H1 (cell line): ENCODE measurements at regions of chr16 and their contacts with region 1.

Region 1: DNA sequence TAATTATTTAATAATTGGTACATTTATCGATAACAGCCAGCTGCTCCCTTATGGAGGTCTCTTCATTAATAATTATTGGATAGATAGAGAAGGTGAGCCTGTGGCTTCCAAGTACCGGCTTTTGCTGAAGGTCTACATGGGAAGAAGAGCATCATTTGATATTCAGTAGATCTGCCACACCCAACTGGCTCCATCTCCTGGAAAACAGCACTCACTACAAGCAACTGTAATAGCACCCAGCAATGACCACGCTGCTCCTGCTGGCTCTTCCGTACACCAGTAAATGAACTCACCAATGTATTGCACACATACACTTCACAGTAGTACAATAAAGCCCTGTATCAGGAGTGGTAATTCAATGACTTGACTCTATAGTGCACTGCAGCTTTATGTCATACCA is 19.5 kb downstream of the MARVELD3 start:
- DNase-seq: no peak
- H3K4me3 ChIP-seq: no peak overlapping the region
- H3K27ac ChIP-seq: no peak overlapping the region
- H3K4me1 ChIP-seq: no peaks in the 10 kb centered on the region
- H3K27me3 ChIP-seq: no peaks in the 10 kb centered on the region
- CTCF ChIP-seq: peak; percentile 54 to 79 (median 77)
- EP300 ChIP-seq: no peak
- POLR2A ChIP-seq: no peak
- RAD21 ChIP-seq: peak; percentile 67 to 78

Region 2: DNA sequence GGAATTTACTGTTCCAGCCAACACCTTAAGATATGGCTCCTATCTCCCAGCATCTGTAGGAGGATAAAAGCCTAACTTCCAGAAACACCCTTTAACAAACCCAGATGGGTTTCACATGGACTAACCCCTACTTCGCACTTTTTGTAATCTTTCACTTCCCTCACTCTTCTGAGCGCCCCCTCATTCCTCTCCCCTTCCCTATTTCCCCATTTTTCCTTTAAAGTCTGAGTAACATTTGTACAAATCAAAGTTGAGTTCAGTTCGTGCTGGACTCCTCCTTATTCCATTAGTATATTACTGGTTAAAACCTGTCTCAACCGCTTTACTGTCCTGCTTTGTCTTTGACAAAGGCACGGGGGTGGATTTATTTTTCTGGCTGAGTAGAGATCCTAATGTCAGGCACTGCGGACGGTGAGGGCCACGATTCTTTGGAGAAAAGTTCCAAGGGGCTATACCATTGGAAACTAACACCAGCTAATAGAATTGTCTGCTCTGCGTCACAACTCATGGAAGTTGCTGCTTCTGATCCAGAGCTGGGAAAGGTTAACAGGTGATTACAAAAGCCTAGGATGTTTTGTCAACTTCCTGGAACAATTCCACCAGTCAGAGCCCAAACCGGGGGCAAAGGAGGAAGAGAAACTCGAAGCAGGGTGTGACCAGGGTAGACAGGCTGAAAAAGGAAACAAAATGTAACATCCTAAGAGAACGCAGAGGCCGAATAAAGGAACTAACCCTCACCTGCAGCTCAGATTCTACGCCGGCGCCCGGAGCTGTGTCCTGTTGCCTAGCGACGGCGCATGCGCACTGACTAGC is 81.1 kb before region 1 on chr16:
- CTCF ChIA-PET with region 1: interaction called, 11 read pairs
- POLR2A ChIA-PET with region 1: interaction called, 4 read pairs
- DNase-seq: peak in 1 of 2 experiments; percentile 98
- H3K4me3 ChIP-seq: peak overlapping the region; percentile 60 to 76 (median 68)
- H3K27ac ChIP-seq: peak overlapping the region; percentile 55; the same call in 1 of the 2 replicates
- H3K4me1 ChIP-seq: peaks cover 0 to 2% (median 0%) of the 10 kb centered on the region in 4 experiments; a peak in 1 of 7 replicates
- H3K27me3 ChIP-seq: no peaks in the 10 kb centered on the region
- CTCF ChIP-seq: no peak
- EP300 ChIP-seq: no peak
- POLR2A ChIP-seq: peak in 1 of 2 experiments; percentile 10; a peak in 2 of 3 replicates
- RAD21 ChIP-seq: no peak

Region 3: GRCh38 chr16:71594000-71594646 is 51.3 kb before region 1 on chr16:
- CTCF ChIA-PET with region 1: no interaction called
- POLR2A ChIA-PET with region 1: no interaction called
- DNase-seq: no peak
- H3K4me3 ChIP-seq: no peak overlapping the region
- H3K27ac ChIP-seq: no peak overlapping the region
- H3K4me1 ChIP-seq: no peaks in the 10 kb centered on the region
- H3K27me3 ChIP-seq: no peaks in the 10 kb centered on the region; a peak in 1 of 7 replicates
- CTCF ChIP-seq: no peak
- EP300 ChIP-seq: no peak
- POLR2A ChIP-seq: no peak
- RAD21 ChIP-seq: no peak

Region 4: GRCh38 chr16:71628810-71629209 is 16.6 kb before region 1 on chr16:
- CTCF ChIA-PET with region 1: interaction called, 26 read pairs
- POLR2A ChIA-PET with region 1: interaction called, 8 read pairs
- DNase-seq: no peak
- H3K4me3 ChIP-seq: no peak overlapping the region
- H3K27ac ChIP-seq: no peak overlapping the region
- H3K4me1 ChIP-seq: peaks cover 0 to 12% (median 6%) of the 10 kb centered on the region in 4 experiments; a peak in 6 of 7 replicates
- H3K27me3 ChIP-seq: no peaks in the 10 kb centered on the region
- CTCF ChIP-seq: no peak
- EP300 ChIP-seq: no peak
- POLR2A ChIP-seq: no peak
- RAD21 ChIP-seq: no peak